Right ventricle myocardium inferior (tissue), 1 donor: ENCODE measurements at regions of chr12 and their contacts with region 1.

Region 1: DNA sequence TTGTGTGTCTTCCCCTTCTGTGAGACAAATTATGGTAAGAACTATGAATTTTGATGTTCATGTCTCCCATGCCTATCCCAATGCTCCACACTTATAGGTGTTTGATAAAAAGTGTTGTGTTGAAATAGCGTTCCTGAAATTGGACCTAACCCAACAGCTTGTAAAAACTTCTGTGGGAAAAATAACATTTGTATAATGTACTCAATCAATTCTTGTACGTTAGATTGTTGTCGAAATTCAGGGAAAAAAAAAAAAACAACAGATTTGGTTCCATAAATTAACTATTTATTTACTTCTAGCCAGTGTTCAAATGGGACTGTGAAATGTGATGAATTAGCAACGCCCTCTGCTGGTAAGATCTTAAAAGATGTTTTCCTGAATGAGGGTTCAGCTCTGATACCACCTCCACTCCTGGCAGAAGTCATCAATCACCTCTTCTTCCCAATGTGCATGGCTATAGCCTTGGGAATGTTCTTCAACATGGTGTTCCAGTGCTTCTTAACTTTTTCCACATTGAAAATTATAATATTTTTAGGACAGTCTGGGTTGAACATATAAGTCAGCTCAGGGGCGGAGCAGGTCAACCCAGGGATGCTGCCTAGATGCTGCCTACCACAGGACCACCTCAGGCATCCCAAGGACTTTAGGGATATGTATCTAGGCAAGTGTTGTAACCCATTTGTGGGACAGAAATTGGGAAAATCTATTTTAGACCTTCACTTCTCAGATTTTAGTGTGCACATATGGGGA is 170.6 kb downstream of the OTOGL start:
- DNase-seq: no peak
- ATAC-seq: peak; percentile 46

Region 2: DNA sequence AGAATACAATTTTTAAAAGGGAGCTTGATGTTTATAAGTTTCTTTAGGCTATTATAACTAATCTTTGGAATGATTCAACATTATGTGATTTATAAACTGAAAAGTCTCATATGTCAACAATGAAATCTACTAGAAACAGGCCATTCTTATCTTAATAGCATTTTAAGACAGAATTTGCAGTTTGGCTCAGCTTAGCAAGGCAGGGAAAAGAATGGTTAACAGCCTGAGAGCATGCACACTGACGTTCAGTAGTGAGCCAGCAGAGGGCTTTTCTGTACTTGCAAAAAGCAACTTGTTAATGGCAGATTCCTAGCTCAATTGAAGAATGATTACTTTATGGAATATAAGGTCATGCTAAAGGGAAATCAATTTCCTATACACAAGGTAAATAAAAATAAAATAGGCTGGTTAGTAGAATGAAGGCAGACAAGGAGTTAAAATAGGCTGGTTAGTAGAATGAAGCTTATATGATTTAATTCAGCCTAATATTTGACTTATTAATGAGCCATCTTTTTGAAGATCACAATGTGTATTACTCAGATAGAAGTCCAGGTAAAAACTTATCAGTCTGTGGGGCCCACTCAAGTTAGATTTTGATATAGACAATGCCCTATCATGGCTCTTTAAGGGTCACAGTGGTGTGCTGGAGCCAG is 74.8 kb before region 1 on chr12:
- intact Hi-C with region 1: loop called (anchors 1 kb)
- DNase-seq: no peak
- ATAC-seq: no peak